Ascending aorta (tissue), 2 donors: ENCODE measurements at regions of chr11 and their contacts with region 1.

Region 1: DNA sequence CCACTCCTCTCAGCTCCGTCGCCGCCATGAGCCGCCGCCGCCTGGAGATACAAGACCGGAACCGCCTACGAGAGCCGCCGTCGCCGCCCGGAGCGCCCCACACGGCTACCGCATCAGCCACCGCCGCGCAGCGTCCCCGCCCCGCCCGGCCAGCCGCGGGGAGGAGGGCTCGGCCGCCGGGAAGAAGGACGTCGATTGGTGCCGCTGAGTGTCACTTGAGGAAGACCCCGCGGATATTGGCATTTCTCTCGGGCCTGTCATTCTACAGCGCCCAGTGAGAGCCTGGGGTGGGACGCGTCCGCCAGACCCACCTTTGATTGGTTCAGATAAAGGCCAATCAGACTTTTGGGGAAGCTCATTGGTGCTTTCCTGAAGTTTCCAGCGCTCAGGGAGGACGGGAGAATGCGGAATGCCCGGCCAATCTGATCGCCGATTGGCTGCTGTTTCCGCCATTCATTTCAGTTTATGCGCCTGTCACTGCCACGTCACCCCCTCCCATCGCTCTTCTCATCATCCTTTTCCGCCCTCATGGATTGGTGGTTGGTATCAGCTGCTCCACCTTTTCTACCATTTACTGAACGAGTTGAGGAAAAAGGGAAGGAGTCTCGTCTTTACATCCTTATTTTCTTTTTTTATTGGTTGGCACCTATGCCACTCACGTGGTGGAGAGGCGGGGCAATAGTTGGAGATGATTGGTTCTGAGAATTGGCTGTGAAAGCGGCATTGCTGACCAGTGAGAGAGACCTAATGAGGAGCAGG is at the start of gene OSBP:
- DNase-seq: peak; percentile 99 to 100
- H3K4me3 ChIP-seq: peak within 1 kb of the TSS; percentile 53 to 79
- H3K27ac ChIP-seq: peak within 1 kb of the TSS; percentile 92
- H3K4me1 ChIP-seq: peaks cover 3 to 19% of the 10 kb centered on the region in 2 donors
- H3K27me3 ChIP-seq: no peaks in the 10 kb centered on the region
- CTCF ChIP-seq: peak in 1 of 3 experiments; percentile 2
- total RNA-seq, gene OSBP: 16.7 TPM

Region 2: DNA sequence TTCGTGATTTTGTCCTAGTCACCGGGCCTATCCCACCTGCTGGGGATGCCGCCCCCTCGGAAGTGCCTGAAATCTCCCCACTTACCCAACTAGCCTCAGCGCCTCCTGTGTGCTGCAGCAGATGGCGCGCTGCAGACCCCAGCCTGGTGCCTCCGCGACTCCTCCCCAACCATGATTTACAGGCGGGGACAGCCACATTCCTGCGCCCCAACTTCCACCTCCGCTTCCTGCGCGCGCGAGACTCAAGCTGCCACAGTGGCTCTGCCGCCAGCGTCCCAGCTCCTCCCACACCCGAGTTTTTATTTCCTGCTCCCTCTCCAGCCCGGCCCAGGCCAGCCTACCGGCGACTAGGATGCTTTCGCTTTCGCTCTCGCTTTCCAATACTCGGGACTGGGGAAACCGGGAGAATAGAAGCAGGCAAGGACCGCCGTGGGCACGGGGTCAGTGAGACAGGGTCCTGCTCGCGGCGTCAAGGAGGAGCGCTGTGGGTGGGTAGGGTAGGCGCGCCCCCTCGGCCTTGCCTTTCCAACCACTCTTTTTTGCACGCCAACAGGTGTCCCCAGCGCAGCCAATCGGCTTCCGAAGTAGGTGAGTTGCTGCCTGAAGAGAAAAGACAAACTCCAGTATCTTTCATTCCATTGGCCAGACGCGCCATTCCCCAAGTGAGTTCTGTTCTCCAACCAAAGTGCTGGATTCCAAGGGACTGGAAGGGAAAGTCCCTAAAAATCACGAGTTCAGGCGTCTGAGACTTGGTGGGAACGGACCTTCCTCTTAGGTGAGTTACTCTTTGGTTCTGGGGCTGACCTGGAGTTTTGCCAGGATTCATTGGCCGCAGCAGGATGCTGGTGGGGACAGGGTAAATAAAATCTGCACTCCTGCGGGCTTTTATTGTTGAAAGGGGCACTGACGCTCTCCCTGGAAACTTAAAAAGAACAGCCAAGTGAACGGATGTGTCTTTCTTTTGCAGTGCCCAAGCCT is 473.0 kb before region 1 on chr11 and contains the start of gene FAM111A:
- intact Hi-C with region 1: loop called (anchors 10 kb)
- DNase-seq: peak; percentile 70 to 93
- H3K4me3 ChIP-seq: peak within 1 kb of the TSS; percentile 79 to 90
- H3K27ac ChIP-seq: peak within 1 kb of the TSS; percentile 95 to 96
- H3K4me1 ChIP-seq: peaks cover 0 to 9% of the 10 kb centered on the region in 2 donors
- H3K27me3 ChIP-seq: no peaks in the 10 kb centered on the region
- CTCF ChIP-seq: peak in 1 of 3 experiments; percentile 18
- total RNA-seq, gene FAM111A: 54.3 TPM

Region 3: GRCh38 chr11:59550368-59550841 is 65.4 kb before region 1 on chr11:
- intact Hi-C with region 1: loop called (anchors 5 kb)
- DNase-seq: peak in 1 of 2 donors; percentile 90
- H3K4me3 ChIP-seq: peak overlapping the region; percentile 50 to 71
- H3K27ac ChIP-seq: peak overlapping the region; percentile 84 to 89
- H3K4me1 ChIP-seq: peaks cover 0 to 4% of the 10 kb centered on the region in 2 donors
- H3K27me3 ChIP-seq: no peaks in the 10 kb centered on the region
- CTCF ChIP-seq: peak; percentile 53 to 75 (median 66)

Region 4: GRCh38 chr11:59668950-59669610 is 53.3 kb after region 1 on chr11 and contains the start of gene PATL1:
- intact Hi-C with region 1: loop called (anchors 1 kb)
- DNase-seq: peak; percentile 97 to 100
- H3K4me3 ChIP-seq: peak within 1 kb of the TSS; percentile 91 to 92
- H3K27ac ChIP-seq: peak within 1 kb of the TSS; percentile 94
- H3K4me1 ChIP-seq: peaks cover 0 to 23% of the 10 kb centered on the region in 2 donors
- H3K27me3 ChIP-seq: no peaks in the 10 kb centered on the region
- CTCF ChIP-seq: no peak
- total RNA-seq, gene PATL1: 6.8 TPM

Region 5: DNA sequence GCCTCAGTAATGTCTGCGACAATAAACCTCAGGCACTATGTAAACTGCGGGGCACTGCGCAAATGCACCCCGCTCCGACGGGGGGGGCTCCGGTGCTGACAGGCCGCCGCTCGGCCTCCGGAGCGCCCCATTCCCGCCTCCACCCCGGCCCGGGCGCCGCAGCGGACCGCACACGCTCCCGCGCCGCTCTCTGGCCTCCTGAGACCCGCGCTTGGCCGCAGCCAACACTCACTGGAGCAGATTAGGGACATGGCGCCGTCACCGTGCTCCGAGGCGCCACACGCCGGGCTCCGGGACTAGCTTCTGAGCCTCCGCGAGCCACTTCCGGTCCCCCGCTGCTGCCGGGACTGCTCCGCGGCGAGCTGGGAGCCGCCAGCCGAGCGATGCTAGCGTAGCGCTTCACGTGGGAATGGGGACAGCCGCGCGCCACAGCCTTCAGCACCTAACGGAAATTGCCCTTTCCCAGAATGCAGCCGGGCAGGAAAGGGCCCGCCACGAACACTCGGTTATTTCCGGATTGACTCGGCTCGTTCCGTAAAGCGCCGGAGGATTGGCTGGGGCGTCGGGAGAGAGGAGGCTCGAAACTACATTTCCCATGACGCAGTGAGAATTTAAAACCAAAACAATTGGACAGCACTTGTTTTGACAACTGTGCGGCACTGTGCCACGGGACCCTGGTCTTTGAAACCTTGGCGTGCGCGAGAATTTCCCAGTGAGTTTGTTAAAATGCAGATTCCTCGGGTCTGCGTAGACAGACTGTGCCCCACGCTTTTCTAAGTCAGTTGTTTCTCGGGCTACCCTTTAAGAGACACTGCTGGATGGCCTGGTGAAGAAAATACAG is 1290.5 kb after region 1 on chr11 and contains the start of gene PRPF19:
- intact Hi-C with region 1: loop called (anchors 5 kb)
- DNase-seq: peak; percentile 87 to 99
- H3K4me3 ChIP-seq: peak within 1 kb of the TSS; percentile 98 to 99
- H3K27ac ChIP-seq: peak within 1 kb of the TSS; percentile 97 to 99
- H3K4me1 ChIP-seq: peaks cover 6 to 18% of the 10 kb centered on the region in 2 donors
- H3K27me3 ChIP-seq: no peaks in the 10 kb centered on the region
- CTCF ChIP-seq: no peak
- total RNA-seq, gene PRPF19: 61.6 TPM